CD4-positive, alpha-beta T cell (primary cell): ENCODE measurements at regions of chr18 and their contacts with region 1.

Region 1: DNA sequence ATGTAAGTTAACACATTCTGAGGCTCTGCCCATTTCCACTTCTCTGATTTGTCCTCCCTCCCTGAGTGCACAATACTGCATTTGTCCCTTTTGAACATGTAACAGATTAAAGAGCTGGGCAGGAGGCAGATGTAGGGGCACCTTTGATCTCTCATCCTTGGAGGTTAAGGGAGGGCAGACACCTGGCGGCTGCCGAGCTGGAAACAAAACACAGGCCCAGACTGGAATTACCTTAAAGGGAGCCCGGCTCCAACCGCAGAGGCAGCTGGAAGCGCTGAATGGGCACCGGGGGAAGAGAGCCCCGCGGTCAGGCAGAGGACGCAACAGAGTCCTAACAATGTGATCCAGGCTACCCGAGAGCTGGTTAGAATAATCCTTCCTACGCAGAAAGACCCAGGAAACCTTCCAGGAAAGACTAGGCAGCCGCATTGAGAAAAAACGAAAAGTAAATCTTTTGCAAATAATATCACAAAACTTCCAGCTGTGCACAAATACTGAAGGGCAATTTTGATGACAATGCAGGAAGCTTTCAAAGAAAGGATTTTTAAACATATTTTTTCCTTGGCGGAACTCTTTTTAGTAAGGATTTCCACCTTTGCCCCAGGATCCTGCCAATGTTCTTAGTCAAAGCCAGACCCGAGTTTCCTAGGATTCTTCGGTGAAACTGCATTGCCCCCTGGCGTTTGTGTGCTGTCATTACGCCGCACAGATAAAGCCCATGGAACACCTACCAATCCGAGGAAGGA is 216.0 kb downstream of the TGIF1 start:
- DNase-seq: peak; percentile 48 to 86 (median 70)
- ATAC-seq: peak; percentile 88
- H3K4me3 ChIP-seq: peak overlapping the region; percentile 19
- H3K4me3 Mint-ChIP-seq: no peak overlapping the region
- H3K27ac ChIP-seq: no peak overlapping the region
- H3K27ac Mint-ChIP-seq: no peak overlapping the region
- H3K4me1 ChIP-seq: peaks cover 7% of the 10 kb centered on the region
- H3K4me1 Mint-ChIP-seq: peaks cover 7% of the 10 kb centered on the region
- H3K27me3 ChIP-seq: no peaks in the 10 kb centered on the region
- H3K27me3 Mint-ChIP-seq: no peaks in the 10 kb centered on the region
- CTCF ChIP-seq: peak; percentile 94

Region 2: GRCh38 chr18:2932247-2933181 is 733.4 kb before region 1 on chr18:
- CTCF ChIA-PET with region 1: no interaction called
- POLR2A ChIA-PET with region 1: no interaction called
- intact Hi-C with region 1: loop called in 1 of 2 experiments (anchors 10 kb)
- DNase-seq: peak in 8 of 14 experiments; percentile 13 to 84 (median 51)
- ATAC-seq: peak; percentile 80
- H3K4me3 ChIP-seq: no peak overlapping the region
- H3K4me3 Mint-ChIP-seq: no peak overlapping the region
- H3K27ac ChIP-seq: peak overlapping the region; percentile 18 to 51
- H3K27ac Mint-ChIP-seq: peak overlapping the region; percentile 67
- H3K4me1 ChIP-seq: peaks cover 9% of the 10 kb centered on the region
- H3K4me1 Mint-ChIP-seq: peaks cover 36% of the 10 kb centered on the region
- H3K27me3 ChIP-seq: no peaks in the 10 kb centered on the region
- H3K27me3 Mint-ChIP-seq: no peaks in the 10 kb centered on the region
- CTCF ChIP-seq: peak; percentile 92

Region 3: GRCh38 chr18:3297025-3297984 is 368.6 kb before region 1 on chr18:
- CTCF ChIA-PET with region 1: interaction called, 30 read pairs
- POLR2A ChIA-PET with region 1: interaction called, 8 read pairs
- intact Hi-C with region 1: no loop called
- DNase-seq: peak; percentile 88 to 96 (median 92)
- ATAC-seq: peak; percentile 96
- H3K4me3 ChIP-seq: peak overlapping the region; percentile 65
- H3K4me3 Mint-ChIP-seq: peak overlapping the region; percentile 91
- H3K27ac ChIP-seq: no peak overlapping the region
- H3K27ac Mint-ChIP-seq: peak overlapping the region; percentile 79
- H3K4me1 ChIP-seq: peaks cover 11% of the 10 kb centered on the region
- H3K4me1 Mint-ChIP-seq: peaks cover 11% of the 10 kb centered on the region
- H3K27me3 ChIP-seq: peaks cover 0 to 15% of the 10 kb centered on the region in 2 experiments
- H3K27me3 Mint-ChIP-seq: peaks cover 35% of the 10 kb centered on the region
- CTCF ChIP-seq: peak; percentile 80

Region 4: GRCh38 chr18:3466045-3466444 is 199.9 kb before region 1 on chr18:
- CTCF ChIA-PET with region 1: interaction called, 4 read pairs
- POLR2A ChIA-PET with region 1: no interaction called
- intact Hi-C with region 1: loop called in 1 of 2 experiments (anchors 5 kb)
- DNase-seq: no peak
- ATAC-seq: no peak
- H3K4me3 ChIP-seq: no peak overlapping the region
- H3K4me3 Mint-ChIP-seq: no peak overlapping the region
- H3K27ac ChIP-seq: peak overlapping the region in 1 of 2 donors; percentile 21
- H3K27ac Mint-ChIP-seq: peak overlapping the region; percentile 16
- H3K4me1 ChIP-seq: peaks cover 11% of the 10 kb centered on the region
- H3K4me1 Mint-ChIP-seq: peaks cover 22% of the 10 kb centered on the region
- H3K27me3 ChIP-seq: no peaks in the 10 kb centered on the region
- H3K27me3 Mint-ChIP-seq: no peaks in the 10 kb centered on the region
- CTCF ChIP-seq: no peak

Region 5: DNA sequence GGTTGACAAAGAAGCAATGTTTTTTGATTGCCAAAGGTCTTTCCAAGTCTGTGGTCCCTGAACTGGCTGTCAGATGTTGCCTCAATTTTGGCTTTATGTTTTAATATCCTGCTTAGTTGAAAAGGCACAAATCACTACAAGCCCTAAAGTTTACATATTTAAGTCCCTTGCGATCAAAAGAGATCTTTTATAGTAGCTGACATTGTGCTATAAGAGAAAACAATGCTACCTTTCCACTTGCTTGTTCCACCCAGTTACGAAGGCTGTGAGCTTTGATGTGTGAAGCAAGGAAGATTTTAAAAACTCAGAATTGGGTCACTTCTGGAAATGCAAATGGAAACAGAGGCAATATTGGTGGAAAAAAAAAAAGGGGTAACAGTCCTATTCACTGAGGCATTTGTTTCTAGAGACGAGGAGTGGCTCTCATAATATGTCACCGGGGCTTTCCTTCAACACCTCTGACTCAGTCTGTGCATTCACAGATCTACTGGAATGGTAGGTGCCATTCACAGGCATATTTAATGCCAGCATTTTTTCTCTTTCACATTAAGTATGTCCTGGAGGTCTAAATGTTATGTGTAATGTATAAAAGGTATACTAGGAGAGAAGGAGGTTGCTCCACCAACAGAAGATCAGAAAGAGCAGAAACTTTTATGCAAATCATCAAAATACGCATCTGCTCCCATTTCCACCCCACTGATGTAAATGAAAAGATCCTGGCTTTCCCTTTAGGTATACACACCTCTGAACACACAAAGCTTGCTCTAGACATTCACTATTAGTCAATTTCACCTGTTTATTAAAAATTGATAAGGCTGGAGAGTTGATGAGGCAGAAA is 124.2 kb before region 1 on chr18:
- CTCF ChIA-PET with region 1: no interaction called
- POLR2A ChIA-PET with region 1: no interaction called
- intact Hi-C with region 1: no loop called
- DNase-seq: no peak
- ATAC-seq: no peak
- H3K4me3 ChIP-seq: no peak overlapping the region
- H3K4me3 Mint-ChIP-seq: no peak overlapping the region
- H3K27ac ChIP-seq: no peak overlapping the region
- H3K27ac Mint-ChIP-seq: no peak overlapping the region
- H3K4me1 ChIP-seq: no peaks in the 10 kb centered on the region
- H3K4me1 Mint-ChIP-seq: no peaks in the 10 kb centered on the region
- H3K27me3 ChIP-seq: no peaks in the 10 kb centered on the region
- H3K27me3 Mint-ChIP-seq: peaks cover 9% of the 10 kb centered on the region
- CTCF ChIP-seq: no peak

Region 6: GRCh38 chr18:3604498-3605408 is 61.2 kb before region 1 on chr18:
- CTCF ChIA-PET with region 1: interaction called, 10 read pairs
- POLR2A ChIA-PET with region 1: interaction called, 3 read pairs
- intact Hi-C with region 1: loop called in 1 of 2 experiments (anchors 2 kb)
- DNase-seq: peak in 5 of 14 experiments; percentile 9 to 85 (median 72)
- ATAC-seq: peak; percentile 69
- H3K4me3 ChIP-seq: peak overlapping the region; percentile 47
- H3K4me3 Mint-ChIP-seq: no peak overlapping the region
- H3K27ac ChIP-seq: peak overlapping the region; percentile 38 to 58
- H3K27ac Mint-ChIP-seq: no peak overlapping the region
- H3K4me1 ChIP-seq: peaks cover 47% of the 10 kb centered on the region
- H3K4me1 Mint-ChIP-seq: peaks cover 8% of the 10 kb centered on the region
- H3K27me3 ChIP-seq: no peaks in the 10 kb centered on the region
- H3K27me3 Mint-ChIP-seq: no peaks in the 10 kb centered on the region
- CTCF ChIP-seq: no peak